ENCODE measurements at regions of chr20 and their contacts with region 1.

Region 1: DNA sequence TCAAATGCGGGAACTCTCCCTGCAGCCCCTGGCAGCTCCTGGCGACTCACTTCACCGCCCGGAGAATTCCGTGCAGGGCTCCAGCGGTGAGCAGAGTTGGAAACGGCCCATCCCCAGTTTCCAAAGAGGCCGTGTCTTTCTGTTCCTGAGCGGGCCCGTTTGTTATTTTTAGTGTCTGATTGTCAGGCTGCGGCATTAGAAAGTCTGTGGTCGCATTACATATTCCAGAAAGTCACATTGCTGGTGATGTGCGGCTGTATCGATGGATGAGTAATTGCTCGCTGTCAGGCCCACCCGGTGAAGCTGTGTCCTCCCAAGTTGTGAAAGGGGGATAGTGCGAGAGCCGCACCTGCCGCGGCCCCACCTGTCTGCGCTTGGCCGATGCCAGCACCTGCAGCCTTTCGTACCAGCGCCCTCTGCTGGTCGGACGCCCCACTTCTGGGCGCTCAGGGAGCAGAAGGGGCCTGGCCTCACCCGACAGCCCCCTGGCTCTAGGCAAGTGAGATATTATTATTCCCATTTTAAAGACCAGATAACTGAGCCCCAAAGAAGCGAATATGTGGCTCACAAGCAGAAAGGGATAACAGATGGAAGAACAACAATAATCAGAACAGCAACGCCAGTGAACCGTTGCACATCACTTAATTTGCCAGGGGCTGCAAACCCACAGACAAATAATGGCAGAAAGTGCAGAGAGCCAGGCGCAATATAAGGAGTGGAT is 244.9 kb downstream of the TSHZ2 start:
- DNase-seq: peak; percentile 63 to 82 (median 74)
- ATAC-seq: peak; percentile 58
- H3K4me3 ChIP-seq: no peak overlapping the region
- H3K27ac ChIP-seq: no peak overlapping the region
- H3K4me1 ChIP-seq: no peaks in the 10 kb centered on the region
- H3K27me3 ChIP-seq: no peaks in the 10 kb centered on the region
- CTCF ChIP-seq: peak; percentile 77 to 92 (median 80)
- POLR2A ChIP-seq: no peak

Region 2: DNA sequence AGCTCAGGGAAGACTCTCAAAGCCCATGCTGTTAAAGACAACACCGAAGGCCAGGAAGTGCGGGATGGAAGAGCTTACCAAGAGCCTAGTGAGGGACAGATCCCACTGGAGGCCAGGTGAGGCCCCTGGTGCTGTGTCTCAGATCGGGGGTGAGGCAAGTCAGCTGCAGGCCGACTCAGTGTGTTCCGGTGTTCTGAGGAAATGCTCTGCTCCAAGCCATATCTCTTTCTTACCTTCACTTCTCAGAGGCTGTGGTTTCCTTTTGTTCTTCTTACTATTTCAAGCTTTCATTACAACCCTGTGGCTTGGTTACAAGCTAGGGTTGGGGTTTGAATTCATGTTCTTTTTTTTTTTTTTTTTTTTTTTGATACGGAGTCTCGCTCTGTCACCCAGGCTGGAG is 911.2 kb before region 1 on chr20:
- intact Hi-C with region 1: loop called (anchors 10 kb)
- DNase-seq: no peak
- ATAC-seq: no peak
- H3K4me3 ChIP-seq: no peak overlapping the region
- H3K27ac ChIP-seq: no peak overlapping the region
- H3K4me1 ChIP-seq: no peaks in the 10 kb centered on the region
- H3K27me3 ChIP-seq: no peaks in the 10 kb centered on the region
- CTCF ChIP-seq: no peak
- POLR2A ChIP-seq: no peak

Region 3: DNA sequence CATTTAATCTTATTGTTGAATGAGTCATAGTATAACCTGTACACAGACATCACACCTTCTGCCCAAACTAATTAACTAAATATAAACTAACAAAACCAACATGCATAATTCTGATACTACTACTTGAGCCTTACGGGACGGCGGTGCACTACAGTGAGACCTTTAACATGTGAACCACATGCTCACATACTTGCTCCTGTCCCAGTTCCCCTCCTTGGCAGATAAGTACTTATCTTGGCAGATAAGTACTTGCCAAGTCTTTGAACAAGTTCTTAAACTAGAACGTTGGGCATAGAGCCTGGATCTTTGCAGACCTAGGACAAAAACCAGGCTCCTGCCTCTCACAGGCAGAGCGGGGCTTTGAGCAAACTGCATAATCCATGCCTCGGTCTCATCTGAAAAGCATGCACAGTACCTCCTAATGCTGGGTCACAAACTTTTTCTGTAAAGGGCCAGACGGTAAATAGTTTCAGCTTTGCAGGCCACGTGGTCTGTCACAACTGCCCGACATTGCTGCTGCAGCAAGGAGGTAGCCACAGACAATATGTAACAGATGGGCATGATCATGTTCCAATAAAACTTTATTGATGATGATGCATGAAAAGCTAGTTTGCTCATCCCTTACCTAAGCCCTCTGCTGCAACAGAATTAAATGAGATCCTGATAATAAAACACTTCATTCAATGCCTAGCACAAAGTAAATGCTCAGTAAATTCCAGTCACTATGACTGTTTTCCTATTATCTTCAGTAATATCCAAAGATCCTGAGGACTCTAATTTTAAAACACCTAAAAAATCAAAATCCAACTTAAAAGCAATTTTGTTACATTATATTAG is 353.7 kb after region 1 on chr20:
- intact Hi-C with region 1: no loop called
- DNase-seq: peak; percentile 27 to 64 (median 48)
- ATAC-seq: peak; percentile 77
- H3K4me3 ChIP-seq: no peak overlapping the region
- H3K27ac ChIP-seq: peak overlapping the region in 2 of 4 donors; percentile 14 to 19
- H3K4me1 ChIP-seq: peaks cover 14% of the 10 kb centered on the region
- H3K27me3 ChIP-seq: no peaks in the 10 kb centered on the region
- CTCF ChIP-seq: no peak
- POLR2A ChIP-seq: no peak